ENCODE measurements at regions of chr20 and their contacts with region 1.

Region 1: GRCh38 chr20:45293041-45294002 is 13.3 kb upstream of the RBPJL start:
- DNase-seq: peak; percentile 87
- ATAC-seq: peak; percentile 88
- H3K4me3 Mint-ChIP-seq: peak overlapping the region; percentile 65
- H3K27ac Mint-ChIP-seq: no peak overlapping the region
- H3K4me1 Mint-ChIP-seq: peaks cover 11% of the 10 kb centered on the region
- H3K27me3 Mint-ChIP-seq: peaks cover 29% of the 10 kb centered on the region

Region 2: GRCh38 chr20:44946271-44946852 is 347.0 kb before region 1 on chr20:
- CTCF ChIA-PET with region 1: no interaction called
- POLR2A ChIA-PET with region 1: no interaction called
- DNase-seq: no peak
- ATAC-seq: no peak
- H3K4me3 Mint-ChIP-seq: no peak overlapping the region
- H3K27ac Mint-ChIP-seq: no peak overlapping the region
- H3K4me1 Mint-ChIP-seq: peaks cover 1% of the 10 kb centered on the region
- H3K27me3 Mint-ChIP-seq: no peaks in the 10 kb centered on the region

Region 3: DNA sequence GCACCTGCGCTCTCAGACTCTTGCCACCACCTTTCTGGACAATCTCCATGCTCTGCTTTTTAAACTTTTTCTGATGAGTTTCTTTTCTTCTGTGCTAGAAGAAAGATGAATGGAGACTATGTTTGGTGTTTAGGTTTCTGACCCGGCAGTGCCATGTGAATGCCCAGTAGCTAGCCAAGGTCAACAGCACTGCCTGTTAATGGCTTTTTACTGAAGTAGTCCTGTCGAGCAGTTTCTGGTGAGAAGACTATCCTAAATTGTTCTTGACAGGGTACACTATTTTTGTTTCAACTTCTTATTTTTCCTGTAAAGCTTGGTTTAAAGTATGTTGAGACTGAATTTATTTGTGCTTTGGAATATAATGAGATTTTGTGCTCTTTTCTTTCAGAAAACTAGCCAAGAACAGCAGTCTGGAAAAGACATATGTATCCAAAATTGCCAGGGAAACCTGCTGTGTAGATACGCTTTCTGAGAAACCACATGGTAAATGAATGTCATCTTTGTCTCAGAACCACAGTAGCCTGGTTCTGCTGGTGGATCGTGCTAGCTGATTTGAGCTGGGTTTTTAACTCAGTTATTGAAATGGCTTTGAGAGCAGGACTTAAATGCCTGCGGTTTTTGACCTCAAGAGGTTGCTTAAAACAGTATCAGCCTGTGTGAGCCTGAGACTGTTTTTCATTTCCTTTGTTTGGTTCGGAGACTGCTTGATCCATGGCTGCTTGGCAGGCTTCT is 240.5 kb before region 1 on chr20:
- CTCF ChIA-PET with region 1: interaction called, 38 read pairs
- POLR2A ChIA-PET with region 1: no interaction called
- DNase-seq: peak; percentile 54
- ATAC-seq: peak; percentile 80
- H3K4me3 Mint-ChIP-seq: peak overlapping the region; percentile 27
- H3K27ac Mint-ChIP-seq: peak overlapping the region; percentile 53
- H3K4me1 Mint-ChIP-seq: peaks cover 78% of the 10 kb centered on the region
- H3K27me3 Mint-ChIP-seq: no peaks in the 10 kb centered on the region

Region 4: GRCh38 chr20:45111799-45112471 is 181.4 kb before region 1 on chr20:
- CTCF ChIA-PET with region 1: interaction called, 11 read pairs
- POLR2A ChIA-PET with region 1: no interaction called
- DNase-seq: no peak
- ATAC-seq: no peak
- H3K4me3 Mint-ChIP-seq: no peak overlapping the region
- H3K27ac Mint-ChIP-seq: no peak overlapping the region
- H3K4me1 Mint-ChIP-seq: peaks cover 5% of the 10 kb centered on the region
- H3K27me3 Mint-ChIP-seq: peaks cover 12% of the 10 kb centered on the region

Region 5: DNA sequence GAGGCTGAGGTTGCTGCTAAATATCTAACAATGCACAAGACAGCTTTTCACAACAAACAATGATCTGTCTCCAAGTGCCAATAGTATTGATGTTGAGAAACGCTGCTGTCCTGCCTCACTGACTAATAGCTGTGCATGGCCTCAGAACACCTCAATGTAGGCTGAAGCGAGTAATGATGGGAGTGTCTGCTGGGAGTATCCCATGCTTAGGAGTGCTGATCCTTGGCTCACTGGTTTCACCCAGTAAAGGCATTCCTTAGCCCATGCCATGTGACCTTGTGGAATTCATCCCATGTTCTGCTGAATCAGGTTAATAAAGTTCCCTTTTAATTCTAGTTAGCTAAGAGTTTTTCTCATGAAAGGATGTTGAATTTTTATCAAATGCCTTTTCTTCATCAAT is 165.3 kb before region 1 on chr20:
- CTCF ChIA-PET with region 1: no interaction called
- POLR2A ChIA-PET with region 1: no interaction called
- DNase-seq: no peak
- ATAC-seq: no peak
- H3K4me3 Mint-ChIP-seq: no peak overlapping the region
- H3K27ac Mint-ChIP-seq: no peak overlapping the region
- H3K4me1 Mint-ChIP-seq: no peaks in the 10 kb centered on the region
- H3K27me3 Mint-ChIP-seq: peaks cover 54% of the 10 kb centered on the region

Region 6: GRCh38 chr20:45211569-45212474 is 81.5 kb before region 1 on chr20:
- CTCF ChIA-PET with region 1: no interaction called
- POLR2A ChIA-PET with region 1: no interaction called
- DNase-seq: no peak
- ATAC-seq: no peak
- H3K4me3 Mint-ChIP-seq: no peak overlapping the region
- H3K27ac Mint-ChIP-seq: no peak overlapping the region
- H3K4me1 Mint-ChIP-seq: no peaks in the 10 kb centered on the region
- H3K27me3 Mint-ChIP-seq: peaks cover 17% of the 10 kb centered on the region

Region 7: DNA sequence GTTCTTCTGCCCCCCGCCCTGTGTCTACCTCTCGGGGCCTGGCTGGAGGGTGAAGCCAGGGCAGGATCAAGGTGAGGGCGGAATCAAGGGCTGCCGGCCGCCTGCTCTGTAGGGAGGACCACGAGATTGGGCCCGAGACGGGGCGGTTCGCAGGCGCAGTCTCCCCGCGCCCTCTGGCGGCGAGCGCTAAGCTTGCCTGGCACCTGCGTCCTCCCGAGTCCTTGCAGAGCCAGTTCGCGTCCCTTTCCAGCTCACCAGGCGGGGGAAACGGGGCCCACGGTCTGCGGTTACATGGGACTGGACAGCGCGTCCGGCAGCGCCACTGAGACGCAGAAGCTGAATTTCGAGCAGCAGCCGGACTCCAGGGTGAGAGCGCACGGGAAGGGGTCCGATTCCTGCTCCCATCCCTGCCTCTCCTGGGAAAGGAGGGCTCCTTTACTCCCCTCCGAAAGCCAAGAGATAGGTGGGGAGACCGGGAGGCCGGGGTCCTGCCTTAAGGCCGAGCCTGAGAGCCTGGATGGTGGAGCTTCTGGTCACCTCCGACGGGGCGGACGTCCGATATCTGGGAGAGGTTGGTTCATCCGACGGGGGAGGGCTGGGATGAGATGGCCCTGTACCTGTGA is 18.4 kb after region 1 on chr20:
- CTCF ChIA-PET with region 1: interaction called, 88 read pairs
- POLR2A ChIA-PET with region 1: no interaction called
- DNase-seq: peak; percentile 70
- ATAC-seq: peak; percentile 82
- H3K4me3 Mint-ChIP-seq: no peak overlapping the region
- H3K27ac Mint-ChIP-seq: no peak overlapping the region
- H3K4me1 Mint-ChIP-seq: peaks cover 9% of the 10 kb centered on the region
- H3K27me3 Mint-ChIP-seq: peaks cover 38% of the 10 kb centered on the region

Region 8: GRCh38 chr20:45373353-45374100 is 80.2 kb after region 1 on chr20:
- CTCF ChIA-PET with region 1: interaction called, 12 read pairs
- POLR2A ChIA-PET with region 1: interaction called, 3 read pairs
- DNase-seq: peak; percentile 91
- ATAC-seq: peak; percentile 90
- H3K4me3 Mint-ChIP-seq: peak overlapping the region; percentile 73
- H3K27ac Mint-ChIP-seq: peak overlapping the region; percentile 87
- H3K4me1 Mint-ChIP-seq: peaks cover 38% of the 10 kb centered on the region
- H3K27me3 Mint-ChIP-seq: no peaks in the 10 kb centered on the region

Region 9: DNA sequence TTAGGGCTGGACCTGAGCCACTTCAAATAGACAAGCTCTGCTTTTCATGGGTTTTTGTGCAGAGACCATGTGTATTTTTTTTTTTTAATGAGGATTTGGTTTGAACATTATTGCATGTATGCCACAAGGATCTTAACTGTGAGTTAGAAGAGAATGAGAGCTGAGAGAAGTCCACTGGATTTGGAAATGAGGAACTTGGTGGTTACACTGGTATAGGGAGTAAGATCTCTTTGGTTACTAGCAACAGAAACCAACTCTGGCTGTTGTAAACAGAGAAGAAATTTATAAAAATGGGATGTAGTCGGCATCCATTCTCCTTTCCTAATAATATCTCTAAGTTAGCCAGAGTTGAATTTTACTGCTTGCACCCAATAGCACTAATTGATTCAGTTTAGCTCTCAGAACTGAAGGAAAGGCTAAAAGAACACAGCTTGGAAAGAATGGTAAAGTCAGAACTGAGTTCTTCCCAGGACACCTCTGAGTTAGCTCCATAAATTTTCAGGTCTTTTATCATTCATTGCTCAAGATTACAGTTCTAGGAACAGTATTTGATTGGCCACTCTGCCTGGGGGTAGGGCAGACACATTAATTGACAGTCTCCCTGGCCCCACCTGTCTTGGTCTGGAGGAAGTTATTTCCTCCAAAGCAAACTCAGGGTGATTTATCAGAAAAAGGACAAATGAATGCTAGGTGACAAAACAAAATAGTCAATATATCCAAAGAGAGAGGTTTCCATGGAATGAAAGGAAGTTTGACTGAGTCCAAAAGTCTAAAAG is 172.4 kb after region 1 on chr20:
- CTCF ChIA-PET with region 1: interaction called, 10 read pairs
- POLR2A ChIA-PET with region 1: no interaction called
- DNase-seq: no peak
- ATAC-seq: no peak
- H3K4me3 Mint-ChIP-seq: no peak overlapping the region
- H3K27ac Mint-ChIP-seq: no peak overlapping the region
- H3K4me1 Mint-ChIP-seq: no peaks in the 10 kb centered on the region
- H3K27me3 Mint-ChIP-seq: peaks cover 34% of the 10 kb centered on the region